H1 (cell line): ENCODE measurements at regions of chr4 and their contacts with region 1.

Region 1: GRCh38 chr4:22356987-22357596 is 158.8 kb downstream of the ADGRA3 start:
- DNase-seq: no peak
- H3K4me3 ChIP-seq: no peak overlapping the region
- H3K27ac ChIP-seq: no peak overlapping the region
- H3K4me1 ChIP-seq: 0 out of 7 replicates have a peak, but pooled peaks cover 0 to 2% (median 0%) of the 10 kb centered on the region in 4 experiments
- H3K27me3 ChIP-seq: no peaks in the 10 kb centered on the region
- CTCF ChIP-seq: peak in 2 of 3 experiments; percentile 15 to 24; a peak in 2 of 4 replicates
- EP300 ChIP-seq: no peak
- POLR2A ChIP-seq: no peak
- RAD21 ChIP-seq: peak; percentile 45 to 51

Region 2: DNA sequence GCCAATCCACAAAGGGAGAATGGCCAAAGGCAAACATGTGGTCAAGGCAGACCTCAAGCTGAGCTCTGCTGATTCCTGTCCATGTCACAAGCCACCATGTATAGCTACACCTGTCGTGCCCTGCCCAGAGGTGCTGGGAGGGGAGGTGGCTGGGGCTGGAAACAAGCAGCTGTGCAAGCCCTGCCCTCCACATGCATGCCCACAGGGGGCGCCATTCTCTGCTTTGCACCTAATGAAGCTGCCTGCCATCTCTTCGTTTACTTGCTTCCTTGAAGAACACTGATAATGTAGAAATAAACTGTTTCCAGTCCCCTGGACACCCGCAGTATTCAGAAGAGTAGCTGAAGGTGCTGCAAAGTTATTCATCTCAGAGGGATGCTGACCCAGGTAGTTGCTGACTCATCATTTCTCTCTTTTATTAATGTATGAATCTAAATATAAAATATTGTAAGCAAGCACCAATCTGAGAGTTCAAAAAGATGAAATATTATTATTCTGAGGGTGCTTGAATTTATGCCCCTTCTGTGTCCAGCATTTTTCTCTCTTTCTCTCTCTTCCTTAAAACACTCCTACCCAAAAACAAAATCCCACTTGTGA is 119.8 kb before region 1 on chr4:
- CTCF ChIA-PET with region 1: interaction called, 15 read pairs
- POLR2A ChIA-PET with region 1: no interaction called
- DNase-seq: peak; percentile 43 to 94
- H3K4me3 ChIP-seq: no peak overlapping the region
- H3K27ac ChIP-seq: no peak overlapping the region
- H3K4me1 ChIP-seq: peaks cover 0 to 4% (median 0%) of the 10 kb centered on the region in 4 experiments; a peak in 1 of 7 replicates
- H3K27me3 ChIP-seq: no peaks in the 10 kb centered on the region
- CTCF ChIP-seq: peak; percentile 81 to 98 (median 97)
- EP300 ChIP-seq: no peak
- POLR2A ChIP-seq: no peak
- RAD21 ChIP-seq: peak; percentile 73 to 76

Region 3: DNA sequence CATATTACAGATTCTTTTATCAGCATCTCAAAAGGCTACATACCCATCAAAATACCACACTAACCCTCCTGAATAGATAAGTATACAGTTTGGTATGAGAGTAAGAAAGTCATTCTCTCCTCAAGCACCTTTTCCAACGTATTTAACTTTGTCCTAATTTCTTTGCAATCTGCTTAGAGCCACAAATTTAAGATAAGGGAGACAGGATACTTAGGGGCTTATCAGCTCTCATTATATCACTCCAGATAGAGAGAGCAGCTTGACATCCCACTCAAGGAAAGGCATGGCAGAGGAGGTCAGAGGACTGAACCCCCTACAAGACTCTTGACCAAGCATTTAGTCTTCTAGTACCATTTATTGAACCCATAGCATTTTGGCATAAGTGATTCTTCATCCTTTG is 103.7 kb before region 1 on chr4:
- CTCF ChIA-PET with region 1: no interaction called
- POLR2A ChIA-PET with region 1: no interaction called
- DNase-seq: no peak
- H3K4me3 ChIP-seq: no peak overlapping the region
- H3K27ac ChIP-seq: no peak overlapping the region
- H3K4me1 ChIP-seq: no peaks in the 10 kb centered on the region
- H3K27me3 ChIP-seq: no peaks in the 10 kb centered on the region
- CTCF ChIP-seq: no peak
- EP300 ChIP-seq: no peak
- POLR2A ChIP-seq: no peak
- RAD21 ChIP-seq: no peak

Region 4: DNA sequence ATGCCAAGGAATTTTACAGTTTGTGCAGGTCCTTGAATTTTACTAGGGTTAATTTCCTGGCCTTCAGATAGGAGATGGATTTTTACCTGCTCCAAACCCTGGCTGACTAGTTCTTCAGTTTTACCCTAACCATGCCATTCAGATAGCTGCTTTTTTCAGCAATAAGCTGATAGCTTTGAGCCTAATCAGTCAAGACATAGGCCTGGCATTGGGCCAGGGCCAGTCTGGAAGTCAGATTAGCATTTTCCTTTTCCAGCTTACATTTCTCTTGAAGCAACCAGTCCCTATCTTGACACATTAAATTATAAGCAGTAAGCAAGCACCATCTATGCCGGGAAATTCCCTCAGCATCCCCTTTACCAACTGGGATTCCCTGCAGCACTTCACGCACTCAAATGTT is 18.3 kb before region 1 on chr4:
- CTCF ChIA-PET with region 1: interaction called, 16 read pairs
- POLR2A ChIA-PET with region 1: no interaction called
- DNase-seq: no peak
- H3K4me3 ChIP-seq: no peak overlapping the region
- H3K27ac ChIP-seq: no peak overlapping the region
- H3K4me1 ChIP-seq: no peaks in the 10 kb centered on the region
- H3K27me3 ChIP-seq: no peaks in the 10 kb centered on the region
- CTCF ChIP-seq: no peak
- EP300 ChIP-seq: no peak
- POLR2A ChIP-seq: no peak
- RAD21 ChIP-seq: no peak

Region 5: GRCh38 chr4:22369901-22370562 is 12.9 kb after region 1 on chr4:
- CTCF ChIA-PET with region 1: interaction called, 11 read pairs
- POLR2A ChIA-PET with region 1: no interaction called
- DNase-seq: no peak
- H3K4me3 ChIP-seq: no peak overlapping the region
- H3K27ac ChIP-seq: no peak overlapping the region
- H3K4me1 ChIP-seq: no peaks in the 10 kb centered on the region
- H3K27me3 ChIP-seq: no peaks in the 10 kb centered on the region
- CTCF ChIP-seq: no peak
- EP300 ChIP-seq: no peak
- POLR2A ChIP-seq: no peak
- RAD21 ChIP-seq: no peak

Region 6: GRCh38 chr4:22458098-22458497 is 101.0 kb after region 1 on chr4:
- CTCF ChIA-PET with region 1: no interaction called
- POLR2A ChIA-PET with region 1: no interaction called
- DNase-seq: no peak
- H3K4me3 ChIP-seq: no peak overlapping the region
- H3K27ac ChIP-seq: no peak overlapping the region
- H3K4me1 ChIP-seq: peaks cover 0 to 10% (median 4%) of the 10 kb centered on the region in 4 experiments; a peak in 3 of 7 replicates
- H3K27me3 ChIP-seq: no peaks in the 10 kb centered on the region
- CTCF ChIP-seq: no peak
- EP300 ChIP-seq: no peak
- POLR2A ChIP-seq: no peak
- RAD21 ChIP-seq: no peak